Dendritic cell treated with granulocyte-macrophage colony-stimulating factor and Interleukin-4, amounts not matched to agents 40 ng/mL and 50 ng/mL, for 4 days (primary cell): ENCODE measurements at regions of chr11 and their contacts with region 1.

Region 1: DNA sequence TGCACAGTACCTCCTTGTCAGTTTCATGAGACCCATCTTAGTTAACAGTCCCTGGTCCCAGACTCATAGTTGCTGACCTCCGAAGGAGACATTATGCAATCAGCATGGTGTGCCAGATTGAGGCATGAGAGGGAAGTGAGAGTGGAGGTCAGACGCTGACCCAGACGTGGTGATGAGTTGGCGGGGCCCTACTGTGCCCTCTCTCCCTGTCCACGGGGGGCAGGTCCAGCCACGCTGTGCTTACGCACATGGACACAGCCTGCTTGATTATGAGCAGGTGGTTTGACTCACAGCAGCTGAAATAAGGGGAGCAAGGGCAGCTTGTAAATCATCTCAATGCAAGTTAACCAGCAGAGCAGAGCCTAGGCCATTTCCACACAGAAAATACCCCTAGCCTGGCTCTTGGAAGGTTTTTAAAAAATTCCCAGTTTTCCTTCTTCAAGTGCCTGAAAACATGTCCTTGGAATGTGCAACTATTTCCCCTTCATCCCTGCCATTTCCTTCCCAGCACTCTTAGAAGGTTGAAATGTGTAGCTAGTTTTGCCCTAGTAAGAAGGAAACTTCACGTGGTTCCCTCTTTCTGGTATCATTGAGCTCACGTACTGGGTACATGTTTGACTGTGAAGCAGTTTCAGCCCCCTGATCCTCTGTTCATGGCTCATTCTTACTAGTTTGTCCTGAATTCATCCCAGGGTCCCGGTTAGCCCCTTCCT is 122.6 kb upstream of the SORL1-AS1 start:
- H3K4me3 Mint-ChIP-seq: no peak overlapping the region
- H3K27ac Mint-ChIP-seq: peak overlapping the region; percentile 6
- H3K4me1 Mint-ChIP-seq: peaks cover 81% of the 10 kb centered on the region
- H3K27me3 Mint-ChIP-seq: peaks cover 31% of the 10 kb centered on the region

Region 2: DNA sequence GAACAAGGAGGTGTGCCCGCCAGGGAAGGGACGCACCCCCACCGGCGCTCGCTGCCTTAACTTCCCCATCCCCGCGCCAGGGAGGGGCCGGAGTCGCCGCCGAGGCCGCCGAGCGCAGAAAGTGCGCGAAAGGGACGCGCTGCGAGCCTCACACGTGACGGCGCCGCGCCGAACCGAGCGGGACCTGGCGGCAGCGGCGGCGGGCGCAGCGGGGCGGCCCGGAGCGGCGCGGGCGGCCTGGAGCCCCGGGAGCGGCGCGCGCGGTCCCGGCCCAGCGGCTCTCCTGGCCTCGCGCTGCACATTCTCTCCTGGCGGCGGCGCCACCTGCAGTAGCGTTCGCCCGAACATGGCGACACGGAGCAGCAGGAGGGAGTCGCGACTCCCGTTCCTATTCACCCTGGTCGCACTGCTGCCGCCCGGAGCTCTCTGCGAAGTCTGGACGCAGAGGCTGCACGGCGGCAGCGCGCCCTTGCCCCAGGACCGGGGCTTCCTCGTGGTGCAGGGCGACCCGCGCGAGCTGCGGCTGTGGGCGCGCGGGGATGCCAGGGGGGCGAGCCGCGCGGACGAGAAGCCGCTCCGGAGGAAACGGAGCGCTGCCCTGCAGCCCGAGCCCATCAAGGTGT is 123.3 kb before region 1 on chr11 and contains the start of gene SORL1:
- intact Hi-C with region 1: loop called (anchors 10 kb)
- H3K4me3 Mint-ChIP-seq: peak within 1 kb of the TSS; percentile 80
- H3K27ac Mint-ChIP-seq: peak within 1 kb of the TSS; percentile 81
- H3K4me1 Mint-ChIP-seq: peaks cover 92% of the 10 kb centered on the region
- H3K27me3 Mint-ChIP-seq: no peaks in the 10 kb centered on the region

Region 3: GRCh38 chr11:121652982-121653381 is 77.6 kb after region 1 on chr11:
- intact Hi-C with region 1: no loop called
- H3K4me3 Mint-ChIP-seq: no peak overlapping the region
- H3K27ac Mint-ChIP-seq: no peak overlapping the region
- H3K4me1 Mint-ChIP-seq: peaks cover 14% of the 10 kb centered on the region
- H3K27me3 Mint-ChIP-seq: peaks cover 20% of the 10 kb centered on the region